Activated naive CD4-positive, alpha-beta T cell treated with anti-CD3 and anti-CD28 coated beads, Interleukin-2, amount 10 ng/mL, durations not matched to agents 7 days and 5 days (primary cell): ENCODE measurements at regions of chr1 and their contacts with region 1.

Region 1: DNA sequence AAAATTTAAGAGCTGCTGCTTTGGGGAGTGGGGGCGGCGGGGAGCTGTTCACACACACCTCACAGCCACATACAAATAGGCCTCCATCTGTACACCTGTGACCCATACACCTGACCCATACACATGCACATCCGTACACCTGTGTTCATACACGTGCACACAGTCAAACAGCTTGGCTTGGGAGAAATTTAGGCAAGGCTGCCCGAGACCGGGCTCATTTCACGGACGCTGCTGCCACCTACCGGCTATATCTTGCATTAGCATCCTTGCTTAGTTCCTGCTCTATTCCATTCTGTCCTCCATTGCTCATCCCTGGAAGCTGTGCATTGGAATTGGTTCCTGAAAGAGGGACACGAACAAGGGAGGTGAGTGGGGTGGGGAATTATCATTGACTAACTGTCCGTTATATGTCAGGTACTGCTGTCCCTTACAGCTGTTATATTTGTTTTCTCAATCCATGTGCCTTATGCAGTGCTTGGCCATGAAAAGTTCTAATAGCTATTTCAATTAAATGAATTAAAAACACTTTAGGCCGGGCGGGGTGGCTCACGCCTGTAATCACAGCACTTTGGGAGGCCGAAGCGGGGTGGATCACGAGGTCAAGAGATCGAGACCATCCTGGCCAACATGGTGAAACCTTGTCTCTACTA is 37.1 kb upstream of the EPB41 start:
- DNase-seq: peak; percentile 84
- H3K4me3 Mint-ChIP-seq: no peak overlapping the region
- H3K27ac Mint-ChIP-seq: no peak overlapping the region
- H3K4me1 Mint-ChIP-seq: peaks cover 10% of the 10 kb centered on the region
- H3K27me3 Mint-ChIP-seq: peaks cover 38% of the 10 kb centered on the region

Region 2: DNA sequence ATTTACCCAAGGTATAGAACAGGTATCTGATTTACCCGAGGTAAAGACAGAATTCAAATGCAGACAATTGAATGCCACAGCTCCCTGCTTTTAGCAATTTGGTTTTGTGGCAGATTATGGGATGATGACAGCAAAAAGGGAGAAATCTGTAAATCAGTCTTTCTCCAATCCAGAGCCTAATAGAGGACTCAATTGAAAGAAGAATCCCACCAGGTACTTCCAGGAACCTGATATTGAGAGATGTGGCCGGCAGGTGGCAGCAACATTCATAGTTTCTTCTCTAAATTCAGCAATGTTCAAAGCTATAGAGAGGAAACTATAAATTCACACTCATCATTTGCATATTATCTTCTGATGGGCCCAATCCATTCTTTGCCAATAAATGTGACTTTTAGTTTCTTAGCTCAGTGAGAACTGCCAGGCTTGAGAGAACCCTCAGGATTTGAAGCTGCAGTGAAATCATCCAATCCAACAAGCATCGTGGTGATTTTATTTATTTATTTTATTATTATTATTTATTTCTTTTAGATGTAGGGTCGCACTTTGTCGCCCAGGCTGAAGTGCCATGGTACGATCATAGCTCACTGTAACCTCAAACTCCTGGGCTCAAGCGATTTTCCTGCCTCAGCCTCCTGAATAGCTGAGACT is 517.5 kb before region 1 on chr1:
- CTCF ChIA-PET with region 1: interaction called, 13 read pairs
- DNase-seq: peak; percentile 86
- H3K4me3 Mint-ChIP-seq: no peak overlapping the region
- H3K27ac Mint-ChIP-seq: no peak overlapping the region
- H3K4me1 Mint-ChIP-seq: peaks cover 3% of the 10 kb centered on the region
- H3K27me3 Mint-ChIP-seq: peaks cover 18% of the 10 kb centered on the region

Region 3: GRCh38 chr1:28642847-28643635 is 234.2 kb before region 1 on chr1 and contains the start of gene TAF12:
- CTCF ChIA-PET with region 1: interaction called, 33 read pairs
- DNase-seq: peak; percentile 94
- H3K4me3 Mint-ChIP-seq: peak within 1 kb of the TSS; percentile 98
- H3K27ac Mint-ChIP-seq: peak within 1 kb of the TSS; percentile 99
- H3K4me1 Mint-ChIP-seq: peaks cover 59% of the 10 kb centered on the region
- H3K27me3 Mint-ChIP-seq: no peaks in the 10 kb centered on the region

Region 4: DNA sequence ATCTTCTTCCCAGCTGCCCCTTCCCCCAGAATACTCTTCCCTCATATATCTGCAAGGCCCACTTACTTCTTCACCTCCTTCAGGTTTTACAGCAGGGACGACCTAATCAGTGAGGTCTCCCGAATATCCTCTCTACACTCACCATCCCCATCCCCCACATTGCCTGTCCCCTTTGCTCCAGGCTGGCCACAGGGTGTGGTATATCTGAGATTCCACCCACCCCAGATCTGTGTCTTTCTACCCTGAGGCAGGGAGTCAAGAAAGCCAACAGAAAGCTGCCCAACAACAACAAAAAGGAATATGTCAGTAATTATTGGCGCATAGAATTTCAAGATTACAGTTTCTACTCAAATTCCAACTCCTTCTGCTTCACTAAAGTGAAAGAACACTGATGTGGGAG is 95.2 kb before region 1 on chr1:
- CTCF ChIA-PET with region 1: interaction called, 118 read pairs
- DNase-seq: no peak
- H3K4me3 Mint-ChIP-seq: no peak overlapping the region
- H3K27ac Mint-ChIP-seq: no peak overlapping the region
- H3K4me1 Mint-ChIP-seq: peaks cover 9% of the 10 kb centered on the region
- H3K27me3 Mint-ChIP-seq: peaks cover 55% of the 10 kb centered on the region

Region 5: DNA sequence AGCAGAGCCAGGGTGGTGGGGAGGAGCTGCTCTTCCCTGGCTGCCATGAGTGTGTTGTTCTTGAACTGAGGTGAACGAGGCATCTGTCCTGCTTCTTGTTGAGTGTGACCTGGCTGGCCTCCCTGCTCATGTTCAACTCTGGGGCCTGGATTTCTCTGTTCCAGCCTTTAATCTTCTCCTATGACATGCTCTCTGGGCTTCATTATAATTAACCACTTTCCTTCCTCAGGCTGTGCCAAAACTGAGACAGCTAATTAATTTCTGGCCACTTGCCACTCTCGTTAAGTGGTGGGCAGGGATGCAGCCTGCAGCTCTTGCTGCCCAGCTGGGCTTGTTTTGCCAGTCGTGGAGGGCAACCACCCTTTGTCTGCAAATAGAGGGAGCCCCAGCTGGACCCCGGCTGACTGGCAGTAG is 42.0 kb before region 1 on chr1:
- CTCF ChIA-PET with region 1: no interaction called
- DNase-seq: no peak
- H3K4me3 Mint-ChIP-seq: no peak overlapping the region
- H3K27ac Mint-ChIP-seq: no peak overlapping the region
- H3K4me1 Mint-ChIP-seq: no peaks in the 10 kb centered on the region
- H3K27me3 Mint-ChIP-seq: peaks cover 44% of the 10 kb centered on the region

Region 6: DNA sequence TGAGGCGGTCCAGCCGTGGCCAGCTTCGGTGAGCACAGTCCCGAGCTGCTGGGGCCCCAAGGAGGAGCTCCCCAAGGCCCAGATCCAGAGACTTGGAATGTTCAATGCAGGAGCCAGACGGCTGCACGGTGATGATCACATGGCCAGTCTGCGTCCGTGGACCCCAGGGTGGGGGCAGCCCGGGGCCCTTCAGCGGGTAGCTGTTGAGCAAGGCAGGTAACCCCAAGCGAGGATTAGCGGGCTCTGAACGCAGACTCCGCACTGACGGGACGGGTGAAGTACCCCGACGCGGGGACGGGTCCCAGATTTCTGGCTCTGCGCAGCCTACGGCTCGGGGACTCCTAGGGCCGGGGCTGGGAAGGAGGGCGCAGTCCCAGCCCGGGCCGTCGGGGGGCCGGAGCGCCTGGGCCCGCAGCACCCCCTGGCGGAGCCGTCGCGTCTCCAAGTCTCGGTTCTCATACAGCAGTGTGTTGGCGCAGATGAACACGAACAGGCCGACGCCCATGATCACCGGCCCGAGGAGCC is 243.8 kb after region 1 on chr1:
- CTCF ChIA-PET with region 1: interaction called, 23 read pairs
- DNase-seq: peak; percentile 79
- H3K4me3 Mint-ChIP-seq: no peak overlapping the region
- H3K27ac Mint-ChIP-seq: no peak overlapping the region
- H3K4me1 Mint-ChIP-seq: peaks cover 14% of the 10 kb centered on the region
- H3K27me3 Mint-ChIP-seq: peaks cover 59% of the 10 kb centered on the region